ENCODE measurements at regions of chr3 and their contacts with region 1.

Region 1: GRCh38 chr3:81643721-81644120 is 117.7 kb downstream of the GBE1 start:
- DNase-seq: no peak
- ATAC-seq: no peak
- H3K4me3 ChIP-seq: no peak overlapping the region
- H3K4me3 Mint-ChIP-seq: no peak overlapping the region
- H3K27ac ChIP-seq: no peak overlapping the region
- H3K27ac Mint-ChIP-seq: no peak overlapping the region
- H3K4me1 ChIP-seq: no peaks in the 10 kb centered on the region
- H3K4me1 Mint-ChIP-seq: no peaks in the 10 kb centered on the region
- H3K27me3 ChIP-seq: no peaks in the 10 kb centered on the region
- H3K27me3 Mint-ChIP-seq: no peaks in the 10 kb centered on the region

Region 2: DNA sequence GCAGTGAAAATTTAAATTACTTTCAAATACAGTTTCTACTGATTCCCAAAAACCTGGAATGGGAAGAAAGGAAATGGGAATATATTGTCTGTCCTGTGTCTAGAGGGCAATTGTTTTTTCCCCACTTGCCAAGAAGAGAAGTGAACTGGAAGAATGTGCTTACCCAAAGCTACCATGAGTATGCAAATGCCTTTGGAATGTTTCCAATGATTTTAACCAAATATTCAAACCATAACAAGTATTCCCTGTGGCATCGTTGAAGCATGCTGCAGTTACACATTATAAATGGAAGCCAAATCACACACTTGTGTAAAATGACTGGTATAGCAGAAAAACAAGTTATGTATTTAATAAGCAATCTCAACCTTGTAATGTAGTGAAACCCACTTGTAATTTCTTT is 250.5 kb before region 1 on chr3:
- CTCF ChIA-PET with region 1: no interaction called
- POLR2A ChIA-PET with region 1: no interaction called
- intact Hi-C with region 1: no loop called
- DNase-seq: no peak
- ATAC-seq: no peak
- H3K4me3 ChIP-seq: no peak overlapping the region
- H3K4me3 Mint-ChIP-seq: no peak overlapping the region
- H3K27ac ChIP-seq: no peak overlapping the region
- H3K27ac Mint-ChIP-seq: no peak overlapping the region
- H3K4me1 ChIP-seq: no peaks in the 10 kb centered on the region
- H3K4me1 Mint-ChIP-seq: no peaks in the 10 kb centered on the region
- H3K27me3 ChIP-seq: no peaks in the 10 kb centered on the region
- H3K27me3 Mint-ChIP-seq: no peaks in the 10 kb centered on the region

Region 3: GRCh38 chr3:81581966-81582599 is 61.6 kb before region 1 on chr3:
- CTCF ChIA-PET with region 1: no interaction called
- POLR2A ChIA-PET with region 1: no interaction called
- intact Hi-C with region 1: loop called in 1 of 2 experiments (anchors 2 kb)
- DNase-seq: peak in 1 of 9 donors; percentile 3
- ATAC-seq: no peak
- H3K4me3 ChIP-seq: no peak overlapping the region
- H3K4me3 Mint-ChIP-seq: no peak overlapping the region
- H3K27ac ChIP-seq: no peak overlapping the region
- H3K27ac Mint-ChIP-seq: no peak overlapping the region
- H3K4me1 ChIP-seq: no peaks in the 10 kb centered on the region
- H3K4me1 Mint-ChIP-seq: no peaks in the 10 kb centered on the region
- H3K27me3 ChIP-seq: no peaks in the 10 kb centered on the region
- H3K27me3 Mint-ChIP-seq: no peaks in the 10 kb centered on the region

Region 4: GRCh38 chr3:81699536-81700320 is 56.0 kb after region 1 on chr3:
- CTCF ChIA-PET with region 1: no interaction called
- POLR2A ChIA-PET with region 1: no interaction called
- intact Hi-C with region 1: no loop called
- DNase-seq: no peak
- ATAC-seq: no peak
- H3K4me3 ChIP-seq: no peak overlapping the region
- H3K4me3 Mint-ChIP-seq: no peak overlapping the region
- H3K27ac ChIP-seq: no peak overlapping the region
- H3K27ac Mint-ChIP-seq: no peak overlapping the region
- H3K4me1 ChIP-seq: no peaks in the 10 kb centered on the region
- H3K4me1 Mint-ChIP-seq: no peaks in the 10 kb centered on the region
- H3K27me3 ChIP-seq: no peaks in the 10 kb centered on the region
- H3K27me3 Mint-ChIP-seq: no peaks in the 10 kb centered on the region

Measured in naive thymus-derived CD4-positive, alpha-beta T cell (primary cell).